CD14-positive monocyte (primary cell): ENCODE measurements at regions of chr11 and their contacts with region 1.

Region 1: GRCh38 chr11:96197801-96198701 is 144.9 kb downstream of the MAML2 start:
- DNase-seq: peak; percentile 37 to 78 (median 75)
- H3K4me3 ChIP-seq: peak overlapping the region in 1 of 3 experiments; percentile 4
- H3K4me3 Mint-ChIP-seq: no peak overlapping the region
- H3K27ac ChIP-seq: peak overlapping the region in 1 of 2 donors; percentile 61
- H3K27ac Mint-ChIP-seq: peak overlapping the region; percentile 43 to 81 (median 66)
- H3K4me1 ChIP-seq: peaks cover 30 to 40% of the 10 kb centered on the region in 2 donors
- H3K4me1 Mint-ChIP-seq: peaks cover 52% of the 10 kb centered on the region
- H3K27me3 ChIP-seq: no peaks in the 10 kb centered on the region
- H3K27me3 Mint-ChIP-seq: peaks cover 2 to 3% (median 2%) of the 10 kb centered on the region in 3 donors
- CTCF ChIP-seq: no peak

Region 2: GRCh38 chr11:96228473-96228891 is 30.4 kb after region 1 on chr11:
- intact Hi-C with region 1: no loop called
- DNase-seq: no peak
- H3K4me3 ChIP-seq: no peak overlapping the region
- H3K4me3 Mint-ChIP-seq: no peak overlapping the region
- H3K27ac ChIP-seq: peak overlapping the region in 1 of 2 donors; percentile 97
- H3K27ac Mint-ChIP-seq: peak overlapping the region; percentile 81 to 96 (median 94)
- H3K4me1 ChIP-seq: peaks cover 51 to 68% of the 10 kb centered on the region in 2 donors
- H3K4me1 Mint-ChIP-seq: peaks cover 62% of the 10 kb centered on the region
- H3K27me3 ChIP-seq: no peaks in the 10 kb centered on the region
- H3K27me3 Mint-ChIP-seq: peaks cover 0 to 2% (median 2%) of the 10 kb centered on the region in 3 donors
- CTCF ChIP-seq: no peak

Region 3: DNA sequence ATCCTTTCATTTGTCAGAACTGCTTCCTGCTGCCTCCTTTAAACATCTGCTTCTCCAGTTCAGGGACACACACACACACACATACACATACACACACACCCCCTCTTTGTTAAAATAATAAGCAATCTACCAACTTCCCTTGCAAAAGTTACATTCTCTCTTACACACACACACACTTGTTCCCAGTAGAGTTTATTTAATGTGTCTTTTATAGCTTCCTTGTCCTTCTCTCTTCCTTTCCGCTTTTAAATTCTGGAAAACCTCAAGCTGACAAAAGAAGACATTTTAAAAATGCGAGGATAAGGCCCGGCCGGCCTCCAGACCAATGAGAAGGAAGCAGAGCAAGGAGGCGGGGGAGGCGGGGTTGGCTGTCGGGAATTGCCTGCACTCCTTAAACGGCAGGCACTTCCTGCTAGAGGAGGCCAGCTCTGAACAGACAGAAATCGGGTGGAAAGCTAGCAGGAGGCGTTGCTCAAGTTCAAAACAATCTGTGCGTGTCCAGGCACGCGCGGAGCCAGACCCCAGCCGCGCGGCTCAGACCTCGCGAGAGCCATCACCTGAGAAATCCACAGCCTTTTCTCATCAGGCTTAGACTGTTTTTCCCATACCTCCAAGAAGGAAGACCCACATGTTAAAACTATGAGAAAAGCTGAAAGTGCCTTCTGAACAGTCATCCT is 45.1 kb after region 1 on chr11:
- intact Hi-C with region 1: loop called in 1 of 2 experiments (anchors 10 kb)
- DNase-seq: peak; percentile 86 to 96 (median 94)
- H3K4me3 ChIP-seq: peak overlapping the region; percentile 42 to 74 (median 48)
- H3K4me3 Mint-ChIP-seq: peak overlapping the region; percentile 81 to 92
- H3K27ac ChIP-seq: peak overlapping the region; percentile 92 to 93
- H3K27ac Mint-ChIP-seq: peak overlapping the region; percentile 92 to 99 (median 98)
- H3K4me1 ChIP-seq: peaks cover 46 to 54% of the 10 kb centered on the region in 2 donors
- H3K4me1 Mint-ChIP-seq: peaks cover 51% of the 10 kb centered on the region
- H3K27me3 ChIP-seq: no peaks in the 10 kb centered on the region
- H3K27me3 Mint-ChIP-seq: no peaks in the 10 kb centered on the region
- CTCF ChIP-seq: no peak

Region 4: GRCh38 chr11:97158243-97158642 is 960.2 kb after region 1 on chr11:
- intact Hi-C with region 1: no loop called
- DNase-seq: no peak
- H3K4me3 ChIP-seq: no peak overlapping the region
- H3K4me3 Mint-ChIP-seq: no peak overlapping the region
- H3K27ac ChIP-seq: no peak overlapping the region
- H3K27ac Mint-ChIP-seq: no peak overlapping the region
- H3K4me1 ChIP-seq: no peaks in the 10 kb centered on the region
- H3K4me1 Mint-ChIP-seq: no peaks in the 10 kb centered on the region
- H3K27me3 ChIP-seq: no peaks in the 10 kb centered on the region
- H3K27me3 Mint-ChIP-seq: no peaks in the 10 kb centered on the region
- CTCF ChIP-seq: no peak